ENCODE measurements at regions of chr5 and their contacts with region 1.

Region 1: DNA sequence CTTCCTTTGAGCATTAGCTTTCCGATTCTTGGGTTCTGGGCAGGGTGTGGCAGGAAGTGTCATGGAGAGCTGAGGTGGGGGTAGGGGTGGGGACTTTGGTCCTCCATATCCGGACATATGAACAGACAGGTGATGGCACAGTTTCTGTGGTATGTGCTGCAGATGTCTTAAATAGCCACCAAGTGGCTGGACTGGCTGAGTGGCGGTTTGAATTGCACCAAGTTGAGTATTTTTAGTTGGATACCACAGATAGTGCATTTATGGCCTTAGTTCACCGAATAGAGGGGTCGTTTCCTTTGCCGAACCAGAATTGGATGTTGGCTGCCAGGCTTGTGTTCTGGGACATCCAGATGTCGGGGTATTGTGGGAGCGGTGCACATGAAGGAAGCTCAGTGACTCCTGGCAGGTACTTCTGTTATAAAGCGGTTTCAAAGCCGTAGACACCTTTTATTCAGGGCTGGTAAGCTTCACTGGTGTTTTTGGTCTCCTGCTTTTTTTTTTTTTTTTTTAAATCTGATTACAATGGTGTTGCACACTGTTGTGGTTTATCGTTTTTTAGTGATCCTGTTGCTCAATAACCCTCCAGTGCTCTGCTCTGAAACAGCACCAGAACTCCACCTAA is 15.1 kb upstream of the TNFAIP8 start:
- DNase-seq: peak; percentile 78
- H3K4me3 Mint-ChIP-seq: peak overlapping the region; percentile 66
- H3K27ac Mint-ChIP-seq: peak overlapping the region; percentile 93
- H3K4me1 Mint-ChIP-seq: peaks cover 94% of the 10 kb centered on the region
- H3K27me3 Mint-ChIP-seq: no peaks in the 10 kb centered on the region

Region 2: DNA sequence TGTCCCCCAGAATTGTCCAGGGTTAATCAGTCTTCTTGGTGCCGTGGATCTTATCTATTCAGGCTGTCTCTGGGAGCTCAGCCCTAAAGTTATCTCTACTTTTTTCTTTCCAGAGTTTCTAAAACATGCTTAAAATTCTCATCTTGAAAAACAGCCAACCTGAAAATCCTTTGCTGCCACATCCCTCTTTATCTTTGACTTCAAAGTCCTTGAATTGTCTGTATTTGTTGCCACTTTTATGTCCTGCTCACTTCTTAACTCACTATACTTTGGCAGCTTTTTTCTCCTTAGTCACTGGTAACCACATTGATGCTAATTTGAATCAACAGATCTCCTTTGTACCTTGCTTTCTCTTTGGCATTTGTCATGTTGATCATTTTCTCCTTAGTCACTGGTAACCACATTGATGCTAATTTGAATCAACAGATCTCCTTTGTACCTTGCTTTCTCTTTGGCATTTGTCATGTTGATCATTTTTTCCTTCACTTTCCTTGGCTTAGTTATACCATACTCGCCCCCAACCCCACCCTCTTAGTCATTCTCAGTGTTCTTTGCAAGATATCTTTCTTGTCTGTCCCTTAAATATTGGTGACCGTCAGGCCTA is 261.3 kb before region 1 on chr5:
- CTCF ChIA-PET with region 1: interaction called, 3 read pairs
- POLR2A ChIA-PET with region 1: interaction called, 3 read pairs
- intact Hi-C with region 1: loop called (anchors 2 kb)
- DNase-seq: peak; percentile 65
- H3K4me3 Mint-ChIP-seq: peak overlapping the region; percentile 23
- H3K27ac Mint-ChIP-seq: peak overlapping the region; percentile 50
- H3K4me1 Mint-ChIP-seq: peaks cover 51% of the 10 kb centered on the region
- H3K27me3 Mint-ChIP-seq: no peaks in the 10 kb centered on the region

Region 3: GRCh38 chr5:119309326-119309725 is 31.4 kb before region 1 on chr5:
- CTCF ChIA-PET with region 1: interaction called, 45 read pairs
- POLR2A ChIA-PET with region 1: interaction called, 4 read pairs
- intact Hi-C with region 1: loop called (anchors 1 kb)
- DNase-seq: no peak
- H3K4me3 Mint-ChIP-seq: peak overlapping the region; percentile 43
- H3K27ac Mint-ChIP-seq: peak overlapping the region; percentile 90
- H3K4me1 Mint-ChIP-seq: peaks cover 94% of the 10 kb centered on the region
- H3K27me3 Mint-ChIP-seq: no peaks in the 10 kb centered on the region

Region 4: DNA sequence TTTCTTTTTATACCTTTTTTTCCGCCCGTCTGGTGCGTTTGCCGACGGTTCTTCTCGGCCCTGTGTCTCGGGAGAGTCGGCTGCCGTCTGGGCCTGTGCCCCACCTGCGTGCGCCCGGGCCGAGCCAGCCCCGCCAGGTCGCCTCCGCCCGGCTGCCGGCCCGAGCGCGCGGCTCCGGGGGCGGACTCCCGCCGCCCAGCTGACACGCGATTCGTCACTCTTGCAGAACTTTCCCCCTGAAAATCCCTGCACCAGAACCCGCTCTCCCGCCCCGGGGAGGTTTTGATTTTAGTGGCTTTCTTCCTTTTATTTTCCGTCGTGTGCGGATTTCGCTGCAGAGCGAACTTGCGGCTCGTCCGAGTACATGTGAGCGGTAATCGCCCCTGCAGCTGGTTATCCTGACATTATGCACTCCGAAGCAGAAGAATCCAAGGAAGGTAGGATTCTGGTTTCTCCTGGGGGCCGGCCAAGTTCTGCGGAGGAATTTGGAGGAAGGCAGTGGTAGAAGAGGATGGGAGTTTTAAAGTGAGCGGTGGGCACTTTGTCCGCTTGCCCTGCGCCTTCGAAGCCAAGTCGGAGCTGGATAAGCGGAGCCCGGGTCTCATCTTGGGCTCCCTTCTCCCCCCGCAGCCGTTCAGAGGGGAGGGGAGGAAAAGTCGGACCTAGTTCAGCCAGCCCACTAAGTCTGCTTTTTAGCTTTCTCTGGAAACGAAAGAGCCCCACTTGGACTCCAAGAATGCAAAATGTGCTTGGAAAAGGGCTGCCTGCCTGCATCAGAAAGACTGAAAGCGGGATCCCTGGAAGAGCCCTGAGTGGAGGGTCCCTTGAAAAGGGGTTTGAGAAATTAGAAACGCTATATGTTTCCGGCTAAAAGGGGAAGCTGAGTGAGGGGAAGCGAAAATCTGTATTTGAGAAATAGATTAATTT is 15.2 kb after region 1 on chr5 and contains the start of gene TNFAIP8:
- CTCF ChIA-PET with region 1: interaction called, 30 read pairs
- POLR2A ChIA-PET with region 1: interaction called, 504 read pairs
- intact Hi-C with region 1: loop called (anchors 2 kb)
- DNase-seq: peak; percentile 90
- H3K4me3 Mint-ChIP-seq: peak within 1 kb of the TSS; percentile 99
- H3K27ac Mint-ChIP-seq: peak within 1 kb of the TSS; percentile 90
- H3K4me1 Mint-ChIP-seq: peaks cover 71% of the 10 kb centered on the region
- H3K27me3 Mint-ChIP-seq: no peaks in the 10 kb centered on the region
- total RNA-seq, gene TNFAIP8: 153 to 159 TPM

Region 5: DNA sequence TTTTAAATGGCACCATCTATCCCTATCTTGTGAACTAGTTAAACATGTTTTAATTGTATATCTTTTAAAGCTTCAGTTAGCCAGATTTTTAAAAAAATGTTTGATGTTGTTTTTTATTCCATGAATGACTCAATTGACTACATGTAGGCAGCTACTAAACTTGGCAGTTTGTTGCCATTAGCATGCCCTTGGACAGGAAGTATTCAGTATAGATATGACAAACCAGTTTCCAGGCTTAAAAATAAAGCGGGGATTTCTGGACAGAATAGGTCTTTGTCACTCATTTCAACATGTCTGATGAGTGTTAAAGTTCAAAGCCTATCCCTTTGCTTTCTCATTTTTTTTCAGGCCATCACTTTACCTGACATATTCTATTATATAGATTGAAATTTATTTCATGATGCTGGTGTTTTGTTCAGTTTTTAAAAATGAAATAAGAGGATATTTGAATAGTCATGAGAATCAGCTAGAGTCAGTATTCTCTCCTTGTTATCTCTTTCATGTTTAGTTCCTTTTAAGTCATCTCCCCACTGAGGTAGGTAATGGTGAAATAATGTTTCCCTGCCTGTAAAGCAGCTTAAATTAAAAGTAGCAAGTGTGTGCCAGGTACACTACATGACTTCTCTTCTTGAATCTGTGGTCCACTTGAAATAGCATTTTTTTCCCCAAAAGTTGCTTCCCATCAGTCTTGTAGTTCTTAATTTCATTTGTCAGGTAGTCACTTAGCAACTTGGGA is 27.0 kb after region 1 on chr5:
- CTCF ChIA-PET with region 1: interaction called, 3 read pairs
- POLR2A ChIA-PET with region 1: interaction called, 504 read pairs
- intact Hi-C with region 1: loop called (anchors 1 kb)
- DNase-seq: no peak
- H3K4me3 Mint-ChIP-seq: peak overlapping the region; percentile 55
- H3K27ac Mint-ChIP-seq: peak overlapping the region; percentile 90
- H3K4me1 Mint-ChIP-seq: peaks cover 83% of the 10 kb centered on the region
- H3K27me3 Mint-ChIP-seq: no peaks in the 10 kb centered on the region